SK-N-SH (cell line): ENCODE measurements at regions of chr6 and their contacts with region 1.

Region 1: GRCh38 chr6:45930420-45931040 is 85.1 kb downstream of the CLIC5 start:
- DNase-seq: peak; percentile 62
- H3K4me3 ChIP-seq: peak overlapping the region in 1 of 2 experiments; percentile 45; a peak in 1 of 4 replicates
- H3K27ac ChIP-seq: no peak overlapping the region
- H3K4me1 ChIP-seq: no peaks in the 10 kb centered on the region
- H3K27me3 ChIP-seq: peaks cover 40% of the 10 kb centered on the region; the same call in 1 of the 2 replicates
- CTCF ChIP-seq: peak; percentile 98
- EP300 ChIP-seq: no peak
- RAD21 ChIP-seq: peak; percentile 63

Region 2: GRCh38 chr6:45911691-45912090 is 18.8 kb before region 1 on chr6:
- CTCF ChIA-PET with region 1: interaction called, 14 read pairs
- POLR2A ChIA-PET with region 1: no interaction called
- DNase-seq: no peak
- H3K4me3 ChIP-seq: no peak overlapping the region
- H3K27ac ChIP-seq: no peak overlapping the region
- H3K4me1 ChIP-seq: no peaks in the 10 kb centered on the region
- H3K27me3 ChIP-seq: peaks cover 17% of the 10 kb centered on the region; the same call in 1 of the 2 replicates
- CTCF ChIP-seq: no peak
- EP300 ChIP-seq: no peak
- RAD21 ChIP-seq: no peak

Region 3: DNA sequence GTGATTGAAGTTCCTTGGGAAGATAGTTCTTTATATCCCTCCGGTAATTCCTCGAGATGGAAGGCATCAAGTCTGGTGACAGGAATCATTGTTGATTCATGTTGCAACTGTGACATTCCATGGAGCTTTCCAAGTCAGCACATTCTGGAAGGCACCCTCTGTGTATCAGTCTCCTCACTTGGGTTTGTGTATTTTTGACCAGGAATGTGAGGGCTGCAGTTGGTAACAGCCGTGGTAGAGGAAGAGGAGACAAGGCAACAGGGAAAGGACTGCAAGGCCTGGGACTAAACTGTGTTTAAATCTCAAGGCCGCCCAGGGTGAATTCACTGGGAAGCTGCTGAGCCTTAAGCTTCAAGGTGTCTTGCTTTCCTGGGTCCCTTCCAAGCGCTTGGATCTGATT is 13.8 kb before region 1 on chr6:
- CTCF ChIA-PET with region 1: interaction called, 26 read pairs
- POLR2A ChIA-PET with region 1: no interaction called
- DNase-seq: no peak
- H3K4me3 ChIP-seq: no peak overlapping the region
- H3K27ac ChIP-seq: no peak overlapping the region
- H3K4me1 ChIP-seq: no peaks in the 10 kb centered on the region
- H3K27me3 ChIP-seq: peaks cover 9% of the 10 kb centered on the region; the same call in 1 of the 2 replicates
- CTCF ChIP-seq: no peak
- EP300 ChIP-seq: no peak
- RAD21 ChIP-seq: no peak

Region 4: DNA sequence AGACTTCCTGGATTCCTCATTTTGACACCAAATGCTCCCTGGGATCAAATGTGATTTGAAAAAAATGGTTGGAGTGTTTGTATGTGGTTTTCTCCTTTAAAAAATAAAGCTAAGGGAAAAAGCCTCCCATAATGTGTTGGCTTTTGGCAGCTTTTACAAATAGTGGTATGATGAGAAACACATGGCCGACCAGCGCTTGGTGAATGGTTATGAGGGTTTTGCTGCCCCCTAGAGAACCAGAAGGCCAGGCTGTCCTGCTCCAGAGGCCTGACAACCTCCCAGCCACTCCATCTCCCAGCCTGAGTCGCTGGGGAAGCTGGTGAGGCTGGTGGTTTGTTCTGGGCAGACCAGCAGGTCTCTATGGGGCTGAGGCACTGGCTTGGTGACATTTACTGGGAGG is 15.8 kb after region 1 on chr6:
- CTCF ChIA-PET with region 1: interaction called, 16 read pairs
- POLR2A ChIA-PET with region 1: no interaction called
- DNase-seq: peak; percentile 44
- H3K4me3 ChIP-seq: no peak overlapping the region
- H3K27ac ChIP-seq: no peak overlapping the region
- H3K4me1 ChIP-seq: no peaks in the 10 kb centered on the region
- H3K27me3 ChIP-seq: peaks cover 21% of the 10 kb centered on the region; the same call in 1 of the 2 replicates
- CTCF ChIP-seq: peak; percentile 69
- EP300 ChIP-seq: no peak
- RAD21 ChIP-seq: peak; percentile 56